ENCODE measurements at regions of chr5 and their contacts with region 1.

Region 1: GRCh38 chr5:160129841-160130240 is 10.6 kb upstream of the PWWP2A start:
- DNase-seq: no peak
- H3K4me3 ChIP-seq: no peak overlapping the region
- H3K27ac ChIP-seq: no peak overlapping the region
- H3K4me1 ChIP-seq: no peaks in the 10 kb centered on the region
- H3K27me3 ChIP-seq: no peaks in the 10 kb centered on the region
- CTCF ChIP-seq: no peak

Region 2: GRCh38 chr5:160183075-160183474 is 53.2 kb after region 1 on chr5:
- CTCF ChIA-PET with region 1: no interaction called
- dilution Hi-C with region 1: loop called (anchors 5 kb)
- in situ Hi-C with region 1: no loop called
- intact Hi-C with region 1: no loop called
- DNase-seq: peak; percentile 44
- H3K4me3 ChIP-seq: no peak overlapping the region
- H3K27ac ChIP-seq: no peak overlapping the region
- H3K4me1 ChIP-seq: peaks cover 8% of the 10 kb centered on the region
- H3K27me3 ChIP-seq: no peaks in the 10 kb centered on the region
- CTCF ChIP-seq: no peak

Region 3: DNA sequence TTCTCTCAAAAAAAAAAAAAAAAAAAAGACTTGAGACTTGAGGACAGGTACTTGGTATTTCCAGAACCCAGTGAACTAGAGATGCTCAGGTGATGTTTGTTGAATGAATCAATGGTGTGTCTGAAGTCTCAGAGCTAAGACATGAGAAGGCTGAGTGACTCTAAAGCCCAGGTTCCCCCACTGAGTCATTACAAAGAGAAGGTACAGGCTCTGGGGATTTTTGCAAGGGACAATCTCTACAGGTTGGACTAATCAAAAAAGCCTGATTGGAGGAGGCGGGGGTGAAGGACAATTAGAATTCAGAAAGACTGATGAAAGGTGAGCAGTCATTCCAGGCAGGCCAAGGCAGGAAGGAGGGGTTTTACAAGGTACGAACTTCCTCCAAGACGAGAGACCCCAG is 91.2 kb after region 1 on chr5:
- CTCF ChIA-PET with region 1: no interaction called
- dilution Hi-C with region 1: loop called (anchors 5 kb)
- in situ Hi-C with region 1: no loop called
- intact Hi-C with region 1: no loop called
- DNase-seq: no peak
- H3K4me3 ChIP-seq: no peak overlapping the region
- H3K27ac ChIP-seq: no peak overlapping the region
- H3K4me1 ChIP-seq: no peaks in the 10 kb centered on the region
- H3K27me3 ChIP-seq: no peaks in the 10 kb centered on the region
- CTCF ChIP-seq: no peak

Measured in mammary epithelial cell (primary cell).